ENCODE measurements at regions of chr13 and their contacts with region 1.

Region 1: GRCh38 chr13:105202354-105202753 is 1333.1 kb downstream of the EFNB2 start:
- DNase-seq: peak; percentile 34
- H3K4me3 Mint-ChIP-seq: no peak overlapping the region
- H3K27ac Mint-ChIP-seq: no peak overlapping the region
- H3K4me1 Mint-ChIP-seq: no peaks in the 10 kb centered on the region
- H3K27me3 Mint-ChIP-seq: no peaks in the 10 kb centered on the region
- CTCF ChIP-seq: peak; percentile 12

Region 2: DNA sequence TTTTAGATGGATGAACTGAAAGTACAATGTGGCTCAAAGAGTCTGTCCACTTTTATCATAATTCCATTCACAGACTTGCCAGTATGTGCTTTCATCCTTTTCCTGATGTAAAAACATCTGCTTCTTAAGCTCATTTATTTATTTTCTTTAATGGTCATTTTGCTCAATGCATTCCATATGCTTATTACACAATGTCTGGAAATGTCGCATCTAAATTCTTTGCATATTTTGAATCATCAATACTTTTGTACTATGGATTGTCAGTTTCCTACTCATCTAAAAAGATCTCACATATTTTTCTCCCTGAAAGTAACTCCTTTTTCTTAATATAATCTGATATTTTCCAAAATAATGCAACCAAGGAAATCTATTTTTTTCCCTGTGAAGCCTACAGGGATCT is 17.3 kb after region 1 on chr13:
- CTCF ChIA-PET with region 1: interaction called, 11 read pairs
- POLR2A ChIA-PET with region 1: no interaction called
- intact Hi-C with region 1: no loop called
- DNase-seq: no peak
- H3K4me3 Mint-ChIP-seq: no peak overlapping the region
- H3K27ac Mint-ChIP-seq: no peak overlapping the region
- H3K4me1 Mint-ChIP-seq: peaks cover 12% of the 10 kb centered on the region
- H3K27me3 Mint-ChIP-seq: no peaks in the 10 kb centered on the region
- CTCF ChIP-seq: no peak

Measured in MCF 10A (cell line).